ENCODE measurements at regions of chr2 and their contacts with region 1.

Region 1: DNA sequence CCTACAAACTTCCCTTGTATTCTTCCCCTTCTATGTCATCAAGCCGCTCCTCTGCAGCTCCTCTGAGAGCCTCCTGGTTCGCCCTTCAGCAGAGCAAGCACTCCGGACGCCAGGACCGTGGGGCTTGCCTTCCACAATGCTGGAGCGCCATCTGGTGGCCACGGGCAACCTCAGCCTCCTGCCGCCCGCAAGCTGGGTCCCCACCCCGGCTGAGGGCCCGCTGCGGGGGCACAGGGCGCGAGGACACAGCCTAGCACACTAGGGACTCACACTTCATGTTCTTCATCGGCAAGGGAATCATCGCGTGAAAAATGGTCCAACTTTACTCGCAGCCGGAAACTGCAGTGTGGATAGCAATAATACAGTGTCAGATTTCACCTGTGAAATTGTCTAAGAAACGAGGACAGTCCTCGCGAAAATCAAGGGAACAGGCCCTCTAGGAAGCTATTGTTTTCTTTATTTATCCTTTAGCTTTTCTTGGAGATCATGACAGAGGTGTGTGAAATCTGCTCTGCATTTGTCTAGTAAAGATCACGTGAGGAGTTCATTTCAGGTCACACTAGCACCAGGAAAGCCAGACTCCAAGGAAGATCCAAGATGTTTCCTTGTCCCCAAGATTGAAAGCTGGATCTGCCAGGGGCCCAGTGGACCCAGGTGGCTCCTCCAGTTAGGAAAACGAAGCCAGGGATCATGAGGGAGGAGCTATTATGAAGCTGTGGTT is 5.8 kb downstream of the PRLH start:
- DNase-seq: peak; percentile 92
- H3K4me3 ChIP-seq: peak overlapping the region in 1 of 4 donors; percentile 14
- H3K27ac ChIP-seq: no peak overlapping the region
- H3K4me1 ChIP-seq: peaks cover 0 to 12% (median 7%) of the 10 kb centered on the region in 4 donors
- H3K27me3 ChIP-seq: no peaks in the 10 kb centered on the region
- CTCF ChIP-seq: peak; percentile 98 to 99 (median 98)
- EP300 ChIP-seq: no peak
- POLR2A ChIP-seq: no peak

Region 2: DNA sequence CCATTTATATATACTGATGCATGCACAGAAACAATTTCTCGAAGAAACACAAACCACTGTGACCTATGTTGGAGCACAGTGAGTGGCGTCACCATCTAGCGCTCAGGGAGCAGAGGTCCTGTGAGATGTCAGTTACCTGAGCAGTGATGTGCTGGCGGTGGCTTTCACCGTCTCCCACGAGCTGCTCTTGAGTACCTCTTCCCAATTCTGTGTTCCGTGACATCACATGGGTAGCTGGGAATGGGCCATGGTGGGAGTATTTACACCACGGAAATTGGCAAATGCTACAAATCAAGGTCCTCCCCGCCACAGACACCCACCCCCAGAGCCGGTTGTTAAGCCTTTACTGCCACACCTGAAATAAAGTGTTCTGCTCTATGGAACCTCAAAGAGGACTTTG is 1428.4 kb before region 1 on chr2:
- in situ Hi-C with region 1: no loop called
- intact Hi-C with region 1: no loop called
- DNase-seq: no peak
- H3K4me3 ChIP-seq: no peak overlapping the region
- H3K27ac ChIP-seq: no peak overlapping the region
- H3K4me1 ChIP-seq: no peaks in the 10 kb centered on the region
- H3K27me3 ChIP-seq: peaks cover 38% of the 10 kb centered on the region
- CTCF ChIP-seq: no peak
- EP300 ChIP-seq: no peak
- POLR2A ChIP-seq: no peak

Region 3: GRCh38 chr2:237092920-237093781 is 479.0 kb before region 1 on chr2:
- in situ Hi-C with region 1: no loop called
- intact Hi-C with region 1: loop called (anchors 10 kb)
- DNase-seq: no peak
- H3K4me3 ChIP-seq: no peak overlapping the region
- H3K27ac ChIP-seq: peak overlapping the region; percentile 11 to 77 (median 64)
- H3K4me1 ChIP-seq: peaks cover 0 to 19% (median 4%) of the 10 kb centered on the region in 4 donors
- H3K27me3 ChIP-seq: no peaks in the 10 kb centered on the region
- CTCF ChIP-seq: peak; percentile 31 to 49 (median 36)
- EP300 ChIP-seq: no peak
- POLR2A ChIP-seq: no peak

Region 4: DNA sequence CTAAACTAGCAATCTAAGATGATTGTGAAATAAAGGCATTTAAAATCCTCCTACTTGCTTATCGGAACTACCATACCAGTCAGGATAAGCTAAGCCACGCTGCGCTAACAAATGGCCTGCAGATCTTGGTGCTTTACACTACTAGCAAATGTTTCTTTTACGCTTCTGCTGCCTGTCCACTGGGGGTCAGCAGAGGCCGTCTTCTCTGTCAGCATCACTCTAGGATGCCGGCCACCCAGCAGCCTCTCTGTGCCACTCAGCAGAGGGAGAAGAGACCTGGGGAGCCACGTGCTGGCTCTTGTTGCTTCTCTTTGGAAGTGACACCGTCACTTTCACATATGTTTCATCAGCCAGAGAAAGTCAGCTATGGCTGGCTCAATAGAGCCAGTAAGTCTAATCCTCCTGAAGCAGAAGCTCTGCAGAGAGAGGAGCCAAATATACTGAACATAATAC is 449.9 kb before region 1 on chr2:
- in situ Hi-C with region 1: no loop called
- intact Hi-C with region 1: loop called (anchors 10 kb)
- DNase-seq: peak; percentile 48
- H3K4me3 ChIP-seq: no peak overlapping the region
- H3K27ac ChIP-seq: no peak overlapping the region
- H3K4me1 ChIP-seq: peaks cover 0 to 18% (median 10%) of the 10 kb centered on the region in 4 donors
- H3K27me3 ChIP-seq: no peaks in the 10 kb centered on the region
- CTCF ChIP-seq: peak; percentile 52 to 65 (median 57)
- EP300 ChIP-seq: no peak
- POLR2A ChIP-seq: no peak

Region 5: DNA sequence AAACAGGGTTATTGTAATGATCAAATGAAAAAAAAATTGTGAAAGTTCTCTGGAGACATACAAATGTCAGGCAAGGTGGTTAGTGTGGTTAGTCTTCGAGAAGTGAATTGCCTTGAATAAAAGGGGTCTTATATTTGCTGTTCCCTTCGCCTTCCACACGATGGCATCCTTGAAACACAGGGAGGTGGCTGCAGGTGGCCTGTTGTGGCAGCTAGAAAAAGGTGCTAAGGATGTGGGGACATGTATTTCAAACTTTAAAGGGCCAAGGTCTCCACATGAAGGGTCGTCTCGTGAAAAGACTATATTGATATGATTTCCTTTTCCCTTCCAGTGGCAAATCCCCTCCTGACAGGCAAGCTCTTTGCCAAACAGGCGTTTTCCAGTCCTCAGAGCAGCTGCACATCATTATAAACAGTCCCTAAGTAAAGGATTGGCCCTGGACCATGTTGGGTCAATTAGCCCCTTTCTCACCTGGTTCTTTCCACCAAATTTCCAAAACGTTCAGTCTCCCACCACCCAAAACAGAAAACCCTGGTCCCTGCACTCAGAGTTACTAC is 418.0 kb before region 1 on chr2:
- in situ Hi-C with region 1: loop called in 1 of 4 experiments (anchors 25 kb)
- intact Hi-C with region 1: no loop called
- DNase-seq: no peak
- H3K4me3 ChIP-seq: no peak overlapping the region
- H3K27ac ChIP-seq: no peak overlapping the region
- H3K4me1 ChIP-seq: no peaks in the 10 kb centered on the region
- H3K27me3 ChIP-seq: no peaks in the 10 kb centered on the region
- CTCF ChIP-seq: peak; percentile 41 to 60 (median 48)
- EP300 ChIP-seq: no peak
- POLR2A ChIP-seq: no peak

Region 6: GRCh38 chr2:237512774-237513466 is 59.3 kb before region 1 on chr2:
- in situ Hi-C with region 1: loop called in 3 of 4 experiments (anchors 5 to 10 kb)
- intact Hi-C with region 1: loop called (anchors 2 kb)
- DNase-seq: peak; percentile 88
- H3K4me3 ChIP-seq: no peak overlapping the region
- H3K27ac ChIP-seq: no peak overlapping the region
- H3K4me1 ChIP-seq: peaks cover 6 to 32% (median 8%) of the 10 kb centered on the region in 4 donors
- H3K27me3 ChIP-seq: no peaks in the 10 kb centered on the region
- CTCF ChIP-seq: peak; percentile 82 to 96 (median 89)
- EP300 ChIP-seq: no peak
- POLR2A ChIP-seq: peak; percentile 12

Measured in transverse colon (tissue), 4 donors.